ENCODE measurements at regions of chr11 and their contacts with region 1.

Region 1: GRCh38 chr11:72112321-72113219 is at the start of gene ANAPC15:
- DNase-seq: peak; percentile 97 to 100 (median 98)
- ATAC-seq: peak; percentile 94
- H3K4me3 ChIP-seq: peak within 1 kb of the TSS; percentile 20
- H3K4me1 ChIP-seq: peaks cover 4% of the 10 kb centered on the region
- CTCF ChIP-seq: peak; percentile 22
- total RNA-seq, gene ANAPC15: 37.9 to 52.1 (median 39.0) TPM

Region 2: DNA sequence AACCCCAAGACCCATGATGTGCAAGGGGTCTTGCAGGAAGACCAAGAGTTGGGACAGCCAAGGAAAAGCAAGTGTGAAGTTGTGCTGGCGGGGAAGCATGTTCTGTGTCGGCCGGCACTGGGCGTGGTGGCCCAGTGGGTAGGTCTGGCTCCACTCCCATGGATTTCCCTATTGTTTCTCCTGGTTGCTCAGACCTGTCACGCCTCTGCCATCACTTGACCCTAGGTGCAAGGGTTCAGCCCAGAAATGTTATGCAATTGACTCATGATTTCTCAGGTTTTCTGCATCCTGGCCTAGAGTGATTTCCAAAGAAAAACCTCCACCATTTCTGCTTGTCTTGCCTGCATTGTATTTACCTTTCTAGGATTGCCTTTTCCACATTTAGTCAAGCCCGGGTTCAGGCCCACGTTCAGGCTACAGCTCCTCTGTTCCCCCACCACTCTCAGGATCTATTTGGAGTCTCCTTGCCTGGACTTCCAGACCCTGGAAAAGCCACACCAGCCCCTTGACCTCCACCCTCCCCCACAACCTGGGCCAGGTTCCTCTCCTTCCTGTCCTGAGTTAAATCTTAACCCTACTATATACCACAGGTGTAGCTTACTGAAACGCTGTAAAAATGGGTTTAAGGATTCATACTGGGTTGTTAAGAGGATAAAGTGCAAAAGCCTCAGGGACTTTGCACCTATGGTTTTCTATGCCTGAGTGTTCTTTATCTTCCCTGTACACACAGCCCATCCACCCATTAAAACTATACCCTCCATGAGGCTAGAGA is 61.9 kb after region 1 on chr11:
- intact Hi-C with region 1: loop called in 1 of 2 experiments (anchors 5 kb)
- DNase-seq: peak; percentile 76 to 82 (median 77)
- ATAC-seq: peak; percentile 95
- H3K4me3 ChIP-seq: no peak overlapping the region
- H3K4me1 ChIP-seq: peaks cover 19% of the 10 kb centered on the region
- CTCF ChIP-seq: no peak

Region 3: GRCh38 chr11:72238040-72238450 is 125.5 kb after region 1 on chr11:
- intact Hi-C with region 1: no loop called
- DNase-seq: peak; percentile 54 to 73 (median 73)
- ATAC-seq: peak; percentile 80
- H3K4me3 ChIP-seq: no peak overlapping the region
- H3K4me1 ChIP-seq: peaks cover 37% of the 10 kb centered on the region
- CTCF ChIP-seq: peak; percentile 71

Region 4: GRCh38 chr11:72250661-72251465 is 138.3 kb after region 1 on chr11:
- intact Hi-C with region 1: no loop called
- DNase-seq: no peak
- ATAC-seq: no peak
- H3K4me3 ChIP-seq: no peak overlapping the region
- H3K4me1 ChIP-seq: no peaks in the 10 kb centered on the region
- CTCF ChIP-seq: no peak

Measured in mucosa of descending colon (tissue), 3 donors.